Activated CD8-positive, alpha-beta T cell treated with anti-CD3 and anti-CD28 coated beads for 36 hours (primary cell): ENCODE measurements at regions of chr17 and their contacts with region 1.

Region 1: GRCh38 chr17:29760761-29761696 is 138.3 kb upstream of the CORO6 start:
- DNase-seq: peak; percentile 96
- ATAC-seq: peak; percentile 94
- H3K4me3 Mint-ChIP-seq: peak overlapping the region; percentile 96
- H3K27ac Mint-ChIP-seq: peak overlapping the region; percentile 94
- H3K4me1 Mint-ChIP-seq: peaks cover 29% of the 10 kb centered on the region
- H3K27me3 Mint-ChIP-seq: no peaks in the 10 kb centered on the region
- CTCF ChIP-seq: no peak

Region 2: DNA sequence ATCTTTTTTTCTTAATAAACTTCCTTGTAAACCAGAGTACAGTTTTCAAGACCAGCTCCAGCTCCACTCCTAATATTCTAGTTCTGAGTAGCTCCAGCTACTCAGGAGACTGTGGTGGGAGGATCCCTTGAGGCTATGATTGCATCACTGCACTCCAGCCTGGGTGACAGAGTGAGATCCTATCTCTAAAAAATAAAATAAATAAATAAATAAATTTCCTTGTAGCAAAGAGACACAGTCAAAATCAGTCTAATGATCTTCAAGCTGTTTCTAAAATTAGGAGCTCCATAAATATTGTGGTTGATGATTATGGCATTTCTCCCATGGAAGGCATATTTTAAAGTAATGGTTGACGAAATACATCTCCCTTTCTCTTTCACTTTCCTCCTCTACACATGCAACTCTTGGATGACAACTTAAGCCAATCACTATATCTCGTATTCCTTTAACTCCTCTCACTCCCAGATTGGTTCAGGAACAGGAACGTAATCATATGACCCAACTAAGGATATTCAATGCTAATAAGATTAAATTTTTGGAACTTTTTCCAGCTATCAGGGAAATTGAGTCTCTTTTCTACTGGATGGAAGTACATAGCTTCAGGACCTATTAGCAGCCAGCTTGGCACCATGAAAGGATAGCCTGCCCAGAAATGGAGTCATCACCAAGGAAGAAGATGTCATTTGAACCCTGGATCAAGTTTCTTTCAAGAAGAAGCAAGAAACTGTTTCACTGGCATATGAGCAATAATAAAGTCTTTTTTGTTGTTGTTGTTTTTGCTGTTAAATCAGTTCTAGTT is 413.0 kb before region 1 on chr17:
- CTCF ChIA-PET with region 1: no interaction called
- POLR2A ChIA-PET with region 1: no interaction called
- intact Hi-C with region 1: no loop called
- DNase-seq: no peak
- ATAC-seq: no peak
- H3K4me3 Mint-ChIP-seq: no peak overlapping the region
- H3K27ac Mint-ChIP-seq: no peak overlapping the region
- H3K4me1 Mint-ChIP-seq: no peaks in the 10 kb centered on the region
- H3K27me3 Mint-ChIP-seq: no peaks in the 10 kb centered on the region
- CTCF ChIP-seq: no peak

Region 3: GRCh38 chr17:29640413-29640812 is 120.6 kb before region 1 on chr17:
- CTCF ChIA-PET with region 1: interaction called, 10 read pairs
- POLR2A ChIA-PET with region 1: interaction called, 18 read pairs
- intact Hi-C with region 1: loop called (anchors 5 kb)
- DNase-seq: no peak
- ATAC-seq: no peak
- H3K4me3 Mint-ChIP-seq: no peak overlapping the region
- H3K27ac Mint-ChIP-seq: peak overlapping the region; percentile 87
- H3K4me1 Mint-ChIP-seq: peaks cover 34% of the 10 kb centered on the region
- H3K27me3 Mint-ChIP-seq: no peaks in the 10 kb centered on the region
- CTCF ChIP-seq: no peak

Region 4: GRCh38 chr17:29664743-29665480 is 96.1 kb before region 1 on chr17:
- CTCF ChIA-PET with region 1: interaction called, 3 read pairs
- POLR2A ChIA-PET with region 1: interaction called, 7 read pairs
- intact Hi-C with region 1: loop called (anchors 5 kb)
- DNase-seq: peak; percentile 18
- ATAC-seq: peak; percentile 95
- H3K4me3 Mint-ChIP-seq: no peak overlapping the region
- H3K27ac Mint-ChIP-seq: peak overlapping the region; percentile 91
- H3K4me1 Mint-ChIP-seq: peaks cover 35% of the 10 kb centered on the region
- H3K27me3 Mint-ChIP-seq: no peaks in the 10 kb centered on the region
- CTCF ChIP-seq: no peak

Region 5: GRCh38 chr17:29705386-29705785 is 55.6 kb before region 1 on chr17:
- CTCF ChIA-PET with region 1: interaction called, 4 read pairs
- POLR2A ChIA-PET with region 1: interaction called, 36 read pairs
- intact Hi-C with region 1: loop called (anchors 2 kb)
- DNase-seq: no peak
- ATAC-seq: no peak
- H3K4me3 Mint-ChIP-seq: peak overlapping the region; percentile 71
- H3K27ac Mint-ChIP-seq: peak overlapping the region; percentile 93
- H3K4me1 Mint-ChIP-seq: peaks cover 45% of the 10 kb centered on the region
- H3K27me3 Mint-ChIP-seq: no peaks in the 10 kb centered on the region
- CTCF ChIP-seq: no peak

Region 6: GRCh38 chr17:29722411-29723198 is 38.4 kb before region 1 on chr17:
- CTCF ChIA-PET with region 1: interaction called, 7 read pairs
- POLR2A ChIA-PET with region 1: interaction called, 14 read pairs
- intact Hi-C with region 1: loop called (anchors 5 kb)
- DNase-seq: peak; percentile 37
- ATAC-seq: peak; percentile 57
- H3K4me3 Mint-ChIP-seq: peak overlapping the region; percentile 30
- H3K27ac Mint-ChIP-seq: peak overlapping the region; percentile 66
- H3K4me1 Mint-ChIP-seq: peaks cover 77% of the 10 kb centered on the region
- H3K27me3 Mint-ChIP-seq: no peaks in the 10 kb centered on the region
- CTCF ChIP-seq: no peak

Region 7: GRCh38 chr17:29747660-29748059 is 13.4 kb before region 1 on chr17:
- CTCF ChIA-PET with region 1: interaction called, 6 read pairs
- POLR2A ChIA-PET with region 1: interaction called, 10 read pairs
- intact Hi-C with region 1: no loop called
- DNase-seq: no peak
- ATAC-seq: no peak
- H3K4me3 Mint-ChIP-seq: no peak overlapping the region
- H3K27ac Mint-ChIP-seq: peak overlapping the region; percentile 50
- H3K4me1 Mint-ChIP-seq: peaks cover 67% of the 10 kb centered on the region
- H3K27me3 Mint-ChIP-seq: no peaks in the 10 kb centered on the region
- CTCF ChIP-seq: no peak